ENCODE measurements at regions of chr6 and their contacts with region 1.

Region 1: GRCh38 chr6:73520688-73521350 is at the start of gene EEF1A1:
- DNase-seq: peak; percentile 98 to 100 (median 99)
- ATAC-seq: peak; percentile 82
- H3K4me3 ChIP-seq: peak within 1 kb of the TSS; percentile 82 to 99
- H3K4me3 Mint-ChIP-seq: peak within 1 kb of the TSS; percentile 92
- H3K27ac ChIP-seq: peak within 1 kb of the TSS; percentile 94 to 97
- H3K27ac Mint-ChIP-seq: peak within 1 kb of the TSS; percentile 97
- H3K4me1 ChIP-seq: peaks cover 49% of the 10 kb centered on the region
- H3K4me1 Mint-ChIP-seq: peaks cover 62% of the 10 kb centered on the region
- H3K27me3 ChIP-seq: no peaks in the 10 kb centered on the region
- H3K27me3 Mint-ChIP-seq: no peaks in the 10 kb centered on the region
- CTCF ChIP-seq: no peak
- total RNA-seq, gene EEF1A1: 16,418 to 17,118 TPM

Region 2: DNA sequence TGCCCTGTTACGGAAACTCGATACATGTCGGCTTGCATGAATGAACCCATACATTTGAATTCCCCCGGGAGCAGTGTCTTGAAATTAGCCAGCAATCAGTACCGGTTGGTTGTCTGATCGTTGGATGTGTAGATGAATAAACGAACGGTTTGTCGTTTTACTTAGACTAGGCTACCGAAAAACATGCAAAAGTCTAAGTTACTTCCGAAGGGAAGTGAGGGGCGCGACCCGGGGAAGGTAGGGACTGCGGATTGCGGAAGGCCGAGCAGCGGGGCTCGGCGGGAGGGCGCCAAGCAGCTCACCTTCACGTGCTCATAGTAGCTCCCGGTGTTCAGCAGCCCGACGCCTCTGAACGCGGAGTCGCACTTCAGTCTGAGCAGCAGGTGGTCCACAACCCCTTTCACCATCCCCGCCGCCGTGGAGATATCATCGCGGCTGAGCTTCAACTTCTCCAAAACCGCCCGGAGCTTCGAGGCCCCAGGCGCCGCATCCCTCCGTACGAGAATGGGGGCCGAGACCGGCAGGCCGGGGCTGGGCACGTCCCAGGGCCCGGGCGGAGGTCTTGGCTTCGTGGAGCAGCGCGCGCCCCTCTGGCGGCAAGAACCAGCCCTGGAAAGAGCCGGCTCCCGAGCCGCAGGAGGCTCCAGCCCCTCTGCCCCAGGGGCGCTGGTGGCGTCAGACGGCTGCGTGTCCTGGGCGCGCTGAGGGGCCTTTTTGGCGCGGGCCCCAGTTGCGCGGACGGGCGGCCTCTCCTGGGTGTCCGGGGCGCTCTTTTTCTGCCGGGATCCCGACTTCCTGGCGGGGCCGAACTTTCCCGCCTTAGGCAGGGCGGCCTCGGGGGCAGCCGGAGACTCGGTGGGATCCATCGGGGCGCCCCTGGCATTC is 69.4 kb before region 1 on chr6:
- CTCF ChIA-PET with region 1: interaction called, 3 read pairs
- POLR2A ChIA-PET with region 1: interaction called, 14 read pairs
- intact Hi-C with region 1: no loop called
- DNase-seq: peak in 8 of 9 experiments; percentile 18 to 71 (median 52)
- ATAC-seq: peak; percentile 61
- H3K4me3 ChIP-seq: peak overlapping the region; percentile 67 to 91
- H3K4me3 Mint-ChIP-seq: peak overlapping the region; percentile 88
- H3K27ac ChIP-seq: peak overlapping the region; percentile 64 to 81
- H3K27ac Mint-ChIP-seq: peak overlapping the region; percentile 82
- H3K4me1 ChIP-seq: peaks cover 22% of the 10 kb centered on the region
- H3K4me1 Mint-ChIP-seq: peaks cover 28% of the 10 kb centered on the region
- H3K27me3 ChIP-seq: no peaks in the 10 kb centered on the region
- H3K27me3 Mint-ChIP-seq: no peaks in the 10 kb centered on the region
- CTCF ChIP-seq: no peak

Region 3: GRCh38 chr6:73508776-73509175 is 12.0 kb before region 1 on chr6:
- CTCF ChIA-PET with region 1: interaction called, 6 read pairs
- POLR2A ChIA-PET with region 1: interaction called, 15 read pairs
- intact Hi-C with region 1: no loop called
- DNase-seq: no peak
- ATAC-seq: no peak
- H3K4me3 ChIP-seq: no peak overlapping the region
- H3K4me3 Mint-ChIP-seq: no peak overlapping the region
- H3K27ac ChIP-seq: no peak overlapping the region
- H3K27ac Mint-ChIP-seq: no peak overlapping the region
- H3K4me1 ChIP-seq: no peaks in the 10 kb centered on the region
- H3K4me1 Mint-ChIP-seq: no peaks in the 10 kb centered on the region
- H3K27me3 ChIP-seq: no peaks in the 10 kb centered on the region
- H3K27me3 Mint-ChIP-seq: no peaks in the 10 kb centered on the region
- CTCF ChIP-seq: no peak

Region 4: DNA sequence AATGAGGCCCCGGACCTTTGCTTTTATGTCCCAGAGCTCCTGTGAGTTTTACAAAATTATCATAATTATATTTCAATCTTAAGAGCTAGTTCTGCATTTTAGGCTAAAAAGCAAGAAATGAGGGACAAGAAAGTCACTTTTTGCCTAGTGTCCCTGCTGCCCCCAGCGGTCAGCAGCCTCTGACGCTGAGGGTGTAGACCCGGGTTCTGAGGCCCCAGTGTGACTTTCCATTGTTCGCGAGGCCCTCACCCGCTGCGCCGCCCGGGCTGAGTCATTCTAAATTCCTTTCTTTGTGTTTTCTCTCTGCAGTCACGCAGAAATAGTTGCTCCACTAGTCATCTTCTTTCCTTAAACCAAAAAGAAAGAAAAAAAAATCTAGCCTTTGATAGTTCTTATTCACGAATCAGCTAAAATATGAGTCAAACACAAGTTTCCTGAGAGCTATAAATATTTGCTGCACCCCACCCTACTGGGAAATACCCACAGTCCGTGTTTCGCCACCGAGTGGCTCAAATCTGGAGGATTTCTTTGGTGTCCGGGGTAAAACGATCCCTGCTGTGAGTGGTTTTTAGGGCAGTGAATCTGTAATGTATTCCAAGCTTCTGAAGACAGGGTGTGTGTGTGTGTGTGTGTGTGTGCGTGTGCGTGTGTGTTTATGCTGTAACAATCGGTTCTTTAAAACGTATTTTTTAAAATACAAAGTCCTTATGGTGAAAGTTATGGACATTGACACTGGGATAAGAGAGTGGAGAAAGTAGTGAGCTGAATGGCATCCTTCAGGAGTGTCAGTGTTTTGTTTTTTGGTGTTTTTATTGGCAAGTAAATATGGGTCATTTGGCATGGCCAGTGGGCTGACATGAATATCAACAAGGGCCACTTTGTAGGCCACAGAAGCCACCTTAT is 59.7 kb after region 1 on chr6:
- CTCF ChIA-PET with region 1: no interaction called
- POLR2A ChIA-PET with region 1: interaction called, 89 read pairs
- intact Hi-C with region 1: loop called (anchors 1 to 2 kb)
- DNase-seq: peak; percentile 3 to 78 (median 64)
- ATAC-seq: peak; percentile 76
- H3K4me3 ChIP-seq: peak overlapping the region in 1 of 2 experiments; percentile 25
- H3K4me3 Mint-ChIP-seq: peak overlapping the region; percentile 69
- H3K27ac ChIP-seq: peak overlapping the region; percentile 17 to 68
- H3K27ac Mint-ChIP-seq: peak overlapping the region; percentile 88
- H3K4me1 ChIP-seq: peaks cover 25% of the 10 kb centered on the region
- H3K4me1 Mint-ChIP-seq: peaks cover 22% of the 10 kb centered on the region
- H3K27me3 ChIP-seq: no peaks in the 10 kb centered on the region
- H3K27me3 Mint-ChIP-seq: no peaks in the 10 kb centered on the region
- CTCF ChIP-seq: no peak

Region 5: DNA sequence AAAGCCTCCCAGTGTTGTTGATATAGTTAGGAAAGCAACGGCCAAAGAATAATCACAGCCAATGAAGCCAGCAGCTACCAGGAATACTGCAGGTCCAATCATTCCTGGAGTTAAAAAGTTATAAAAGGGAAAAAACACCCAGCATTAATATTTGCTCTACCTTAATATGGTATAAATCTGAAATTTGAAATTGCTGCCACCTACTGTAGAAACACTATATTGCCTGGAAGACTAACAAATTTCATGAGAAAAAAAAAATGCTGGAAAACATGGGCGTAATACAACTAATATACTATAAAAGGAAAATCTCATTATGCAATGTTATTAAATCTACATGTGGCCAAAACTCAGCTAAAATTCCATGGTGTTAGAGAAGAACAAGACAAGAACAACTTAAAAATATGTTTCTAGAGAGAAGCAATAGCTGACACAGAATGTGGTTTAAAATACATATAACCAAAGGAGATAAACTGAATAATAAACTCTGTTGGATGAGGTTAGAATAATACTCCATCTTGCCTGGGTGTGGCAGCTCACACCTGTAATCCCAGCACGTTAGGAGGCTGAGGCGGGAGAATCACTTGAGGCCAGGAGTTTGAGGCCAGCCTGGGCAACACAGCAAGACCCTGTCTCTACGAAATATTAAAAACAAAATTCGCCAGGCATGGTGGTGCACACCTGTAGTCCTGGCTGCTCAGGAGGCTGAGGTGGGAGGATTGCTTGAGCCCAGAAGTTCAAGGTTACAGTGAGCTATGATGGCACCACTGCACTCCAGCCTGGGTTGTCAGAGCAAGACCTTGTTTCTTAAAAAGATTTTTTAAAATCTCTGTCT is 89.8 kb after region 1 on chr6:
- CTCF ChIA-PET with region 1: interaction called, 288 read pairs
- POLR2A ChIA-PET with region 1: interaction called, 57 read pairs
- intact Hi-C with region 1: no loop called
- DNase-seq: peak in 2 of 9 experiments; percentile 62 to 74
- ATAC-seq: peak; percentile 77
- H3K4me3 ChIP-seq: no peak overlapping the region
- H3K4me3 Mint-ChIP-seq: no peak overlapping the region
- H3K27ac ChIP-seq: no peak overlapping the region
- H3K27ac Mint-ChIP-seq: no peak overlapping the region
- H3K4me1 ChIP-seq: no peaks in the 10 kb centered on the region
- H3K4me1 Mint-ChIP-seq: peaks cover 5% of the 10 kb centered on the region
- H3K27me3 ChIP-seq: no peaks in the 10 kb centered on the region
- H3K27me3 Mint-ChIP-seq: no peaks in the 10 kb centered on the region
- CTCF ChIP-seq: peak; percentile 80

Region 6: GRCh38 chr6:73732845-73733675 is 212.2 kb after region 1 on chr6:
- CTCF ChIA-PET with region 1: no interaction called
- POLR2A ChIA-PET with region 1: no interaction called
- intact Hi-C with region 1: loop called in 1 of 2 experiments (anchors 5 kb)
- DNase-seq: peak; percentile 36 to 78 (median 62)
- ATAC-seq: peak; percentile 100
- H3K4me3 ChIP-seq: no peak overlapping the region
- H3K4me3 Mint-ChIP-seq: no peak overlapping the region
- H3K27ac ChIP-seq: no peak overlapping the region
- H3K27ac Mint-ChIP-seq: no peak overlapping the region
- H3K4me1 ChIP-seq: no peaks in the 10 kb centered on the region
- H3K4me1 Mint-ChIP-seq: no peaks in the 10 kb centered on the region
- H3K27me3 ChIP-seq: no peaks in the 10 kb centered on the region
- H3K27me3 Mint-ChIP-seq: no peaks in the 10 kb centered on the region
- CTCF ChIP-seq: peak; percentile 77

Region 7: DNA sequence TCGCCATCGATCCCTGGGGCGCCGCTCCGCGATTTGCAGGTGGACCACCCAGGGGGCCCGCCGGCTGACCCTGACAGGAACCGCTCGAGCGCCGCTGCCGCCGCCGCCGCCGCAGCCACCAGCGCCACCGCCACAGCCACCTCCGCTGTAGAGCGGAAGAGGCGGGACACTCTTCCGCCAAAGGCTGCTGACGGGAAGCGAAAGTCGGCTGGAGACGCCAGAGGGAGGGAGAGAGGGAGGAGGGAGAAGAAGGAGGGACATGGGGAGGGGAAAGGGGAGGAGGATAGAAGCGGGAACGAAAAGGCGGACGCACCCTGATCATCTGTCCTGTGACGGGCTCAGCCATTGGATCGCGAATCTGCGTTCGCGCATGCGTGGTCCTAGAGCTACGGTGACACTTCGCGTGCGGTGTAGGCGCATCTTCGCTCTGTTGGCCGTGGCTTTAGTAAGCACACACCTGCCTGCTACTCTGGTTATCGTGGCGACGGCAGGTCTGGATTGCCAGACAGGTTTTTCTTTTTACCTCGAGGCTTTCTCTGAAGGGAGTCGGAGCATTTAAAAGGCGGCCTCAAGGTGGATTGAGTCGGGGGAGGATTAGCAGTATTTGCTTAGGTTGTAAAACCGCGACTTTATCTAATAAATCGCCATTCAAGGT is 1763.9 kb after region 1 on chr6 and contains the start of gene TMEM30A:
- CTCF ChIA-PET with region 1: no interaction called
- POLR2A ChIA-PET with region 1: interaction called, 6 read pairs
- intact Hi-C with region 1: loop called in 1 of 2 experiments (anchors 2 kb)
- DNase-seq: peak; percentile 89 to 100 (median 96)
- ATAC-seq: peak; percentile 96
- H3K4me3 ChIP-seq: peak within 1 kb of the TSS; percentile 65 to 97
- H3K4me3 Mint-ChIP-seq: no peak within 1 kb of the TSS
- H3K27ac ChIP-seq: peak within 1 kb of the TSS; percentile 72 to 88
- H3K27ac Mint-ChIP-seq: no peak within 1 kb of the TSS
- H3K4me1 ChIP-seq: peaks cover 47% of the 10 kb centered on the region
- H3K4me1 Mint-ChIP-seq: peaks cover 44% of the 10 kb centered on the region
- H3K27me3 ChIP-seq: no peaks in the 10 kb centered on the region
- H3K27me3 Mint-ChIP-seq: no peaks in the 10 kb centered on the region
- CTCF ChIP-seq: no peak
- total RNA-seq, gene TMEM30A: 19.4 to 27.1 TPM

Measured in CD8-positive, alpha-beta T cell (primary cell).